ENCODE measurements at regions of chr2 and their contacts with region 1.

Region 1: GRCh38 chr2:24065341-24065740 is 10.8 kb downstream of the SF3B6 start:
- DNase-seq: no peak
- ATAC-seq: no peak
- H3K4me3 ChIP-seq: no peak overlapping the region
- H3K27ac ChIP-seq: no peak overlapping the region
- H3K4me1 ChIP-seq: no peaks in the 10 kb centered on the region
- CTCF ChIP-seq: no peak
- EP300 ChIP-seq: no peak
- POLR2A ChIP-seq: no peak
- RAD21 ChIP-seq: no peak

Region 2: DNA sequence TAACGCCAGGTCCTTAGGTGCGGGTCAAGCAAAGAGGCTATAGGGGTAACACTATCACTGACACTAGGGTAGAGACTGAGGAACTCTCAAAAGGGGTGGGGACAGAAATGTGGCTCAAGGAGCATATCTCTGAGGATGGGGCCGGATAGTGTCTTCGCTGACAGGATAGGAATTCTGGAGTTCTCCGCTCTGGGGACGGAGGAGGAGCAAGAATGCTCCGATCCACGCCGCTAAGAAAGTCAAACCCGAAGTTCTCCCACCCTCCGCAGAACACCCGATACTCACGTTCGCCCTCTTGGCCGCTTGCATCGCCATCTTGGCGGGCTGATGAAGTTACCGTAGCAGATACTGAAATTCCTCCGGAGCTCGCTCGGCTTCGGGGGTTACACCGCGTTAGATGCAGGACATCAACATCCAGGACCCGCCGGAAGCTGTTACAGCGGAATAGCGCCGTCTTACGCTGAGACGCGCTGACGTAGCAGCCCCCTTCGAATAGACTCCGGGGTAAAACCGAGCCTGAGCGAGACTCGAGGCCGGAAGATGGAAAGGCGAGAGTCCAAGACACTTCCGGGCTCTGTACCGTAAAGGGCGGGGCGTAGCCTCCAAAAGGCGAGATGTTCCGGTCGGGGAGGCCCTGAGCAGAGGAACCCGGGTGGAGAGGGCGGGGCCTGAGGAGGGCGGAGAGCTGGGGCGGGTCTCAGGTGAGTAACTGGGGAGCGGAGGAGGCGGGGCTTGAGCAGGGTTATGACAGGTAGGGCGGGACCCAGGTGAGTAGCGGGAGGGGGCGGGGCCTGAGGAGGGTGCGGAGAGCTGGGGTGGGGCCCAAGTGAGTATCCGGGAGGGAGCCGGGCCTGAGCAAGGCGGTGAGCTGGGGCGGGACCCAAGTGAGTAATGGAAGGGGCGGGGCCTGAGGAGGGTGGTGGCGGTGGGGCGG is 10.8 kb after region 1 on chr2 and contains the start of gene SF3B6:
- CTCF ChIA-PET with region 1: interaction called, 50 read pairs
- POLR2A ChIA-PET with region 1: interaction called, 15 read pairs
- DNase-seq: peak; percentile 92 to 99
- ATAC-seq: peak; percentile 91 to 94
- H3K4me3 ChIP-seq: peak within 1 kb of the TSS; percentile 82
- H3K27ac ChIP-seq: peak within 1 kb of the TSS; percentile 84 to 85
- H3K4me1 ChIP-seq: peaks cover 19% of the 10 kb centered on the region
- CTCF ChIP-seq: no peak
- EP300 ChIP-seq: no peak
- POLR2A ChIP-seq: peak; percentile 88
- RAD21 ChIP-seq: peak; percentile 28 to 31; a peak in 3 of 5 replicates
- polyA plus RNA-seq, gene SF3B6: 296 and 315 TPM in 2 replicates

Region 3: GRCh38 chr2:24175631-24176187 is 110.4 kb after region 1 on chr2:
- CTCF ChIA-PET with region 1: no interaction called
- POLR2A ChIA-PET with region 1: no interaction called
- DNase-seq: no peak
- ATAC-seq: no peak
- H3K4me3 ChIP-seq: no peak overlapping the region
- H3K27ac ChIP-seq: no peak overlapping the region
- H3K4me1 ChIP-seq: no peaks in the 10 kb centered on the region
- CTCF ChIP-seq: no peak
- EP300 ChIP-seq: no peak
- POLR2A ChIP-seq: no peak
- RAD21 ChIP-seq: no peak